Panc1 (cell line): ENCODE measurements at regions of chr3 and their contacts with region 1.

Region 1: DNA sequence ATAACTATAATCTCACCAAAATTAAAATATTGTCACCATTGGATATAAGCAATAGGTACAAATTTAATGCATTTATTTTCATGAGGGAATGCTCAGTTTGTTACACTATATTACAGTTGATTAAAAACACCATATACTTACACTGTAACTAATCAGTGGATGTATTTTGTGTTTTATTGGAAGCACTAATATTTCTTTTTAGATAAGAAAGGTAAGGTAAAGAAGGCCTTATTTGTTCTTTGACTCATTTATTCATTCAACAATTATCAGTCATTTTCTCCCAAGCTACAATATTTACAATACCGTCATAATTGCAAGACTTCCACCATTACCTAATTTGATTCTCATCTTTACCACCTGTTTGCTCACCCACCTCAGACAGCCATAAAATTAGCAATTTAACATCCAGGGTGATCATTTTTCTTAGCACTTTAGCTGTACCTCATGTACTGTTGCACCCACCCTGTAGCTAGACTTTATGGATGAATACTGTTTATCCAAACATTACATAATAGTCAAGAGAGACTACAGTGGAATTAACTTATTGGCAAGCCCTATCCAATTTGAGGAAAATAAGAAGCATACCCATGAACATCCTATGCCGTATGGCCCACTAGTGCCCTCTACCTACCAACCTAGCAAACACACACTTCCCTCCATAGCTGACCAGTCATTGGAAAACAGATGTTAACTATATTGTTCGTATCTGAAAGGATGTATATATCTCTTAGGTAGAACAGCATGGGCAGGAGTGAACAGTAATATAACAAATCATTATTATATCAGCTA is 229.6 kb downstream of the BBX start:
- DNase-seq: no peak
- ATAC-seq: no peak
- H3K4me3 ChIP-seq: no peak overlapping the region
- H3K27ac ChIP-seq: no peak overlapping the region
- H3K4me1 ChIP-seq: no peaks in the 10 kb centered on the region
- H3K27me3 ChIP-seq: no peaks in the 10 kb centered on the region
- CTCF ChIP-seq: peak; percentile 62; the same call in 1 of the 2 replicates

Region 2: GRCh38 chr3:107660306-107660976 is 92.0 kb before region 1 on chr3:
- CTCF ChIA-PET with region 1: interaction called, 11 read pairs
- POLR2A ChIA-PET with region 1: no interaction called
- in situ Hi-C with region 1: no loop called
- intact Hi-C with region 1: no loop called
- DNase-seq: no peak
- ATAC-seq: no peak
- H3K4me3 ChIP-seq: no peak overlapping the region
- H3K27ac ChIP-seq: no peak overlapping the region
- H3K4me1 ChIP-seq: no peaks in the 10 kb centered on the region
- H3K27me3 ChIP-seq: no peaks in the 10 kb centered on the region
- CTCF ChIP-seq: peak; percentile 70; the same call in 1 of the 2 replicates